Heart left ventricle (tissue), 16 donors: ENCODE measurements at regions of chr5 and their contacts with region 1.

Region 1: DNA sequence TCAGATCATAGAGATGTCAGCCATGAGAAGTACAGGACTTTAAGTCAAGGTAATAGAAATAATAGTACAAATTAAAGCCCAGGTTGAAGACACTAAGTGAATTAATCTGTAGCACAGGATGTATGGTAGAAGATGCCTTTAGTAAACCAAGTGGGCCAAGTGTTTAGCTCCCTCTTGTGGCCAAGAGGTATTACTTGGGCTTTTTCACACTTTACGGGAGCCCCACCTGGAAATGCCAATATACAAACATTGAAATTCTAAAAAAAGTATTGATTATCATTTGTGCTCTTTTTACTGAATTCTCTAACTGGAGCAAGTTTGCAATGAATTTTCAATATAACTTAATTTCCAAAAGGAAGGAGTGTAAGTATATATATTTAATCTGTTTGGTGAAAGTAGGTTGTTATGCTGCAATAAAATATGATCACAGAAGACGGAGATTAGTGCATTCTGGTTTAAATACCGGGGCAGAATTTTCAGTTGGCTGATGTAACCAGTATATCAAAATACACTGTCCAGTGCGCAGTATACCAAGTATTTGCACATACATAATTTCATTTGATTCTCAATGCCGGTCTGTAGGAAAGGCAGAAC is 84.7 kb downstream of the PARP8 start:
- DNase-seq: peak in 2 of 5 donors; percentile 18 to 22
- ATAC-seq: peak in 3 of 4 donors; percentile 65 to 75 (median 68)
- H3K4me3 ChIP-seq: no peak overlapping the region
- H3K27ac ChIP-seq: no peak overlapping the region
- H3K4me1 ChIP-seq: peaks cover 0 to 21% (median 0%) of the 10 kb centered on the region in 12 donors
- H3K27me3 ChIP-seq: no peaks in the 10 kb centered on the region
- CTCF ChIP-seq: peak; percentile 67 to 87 (median 80)
- POLR2A ChIP-seq: no peak

Region 2: DNA sequence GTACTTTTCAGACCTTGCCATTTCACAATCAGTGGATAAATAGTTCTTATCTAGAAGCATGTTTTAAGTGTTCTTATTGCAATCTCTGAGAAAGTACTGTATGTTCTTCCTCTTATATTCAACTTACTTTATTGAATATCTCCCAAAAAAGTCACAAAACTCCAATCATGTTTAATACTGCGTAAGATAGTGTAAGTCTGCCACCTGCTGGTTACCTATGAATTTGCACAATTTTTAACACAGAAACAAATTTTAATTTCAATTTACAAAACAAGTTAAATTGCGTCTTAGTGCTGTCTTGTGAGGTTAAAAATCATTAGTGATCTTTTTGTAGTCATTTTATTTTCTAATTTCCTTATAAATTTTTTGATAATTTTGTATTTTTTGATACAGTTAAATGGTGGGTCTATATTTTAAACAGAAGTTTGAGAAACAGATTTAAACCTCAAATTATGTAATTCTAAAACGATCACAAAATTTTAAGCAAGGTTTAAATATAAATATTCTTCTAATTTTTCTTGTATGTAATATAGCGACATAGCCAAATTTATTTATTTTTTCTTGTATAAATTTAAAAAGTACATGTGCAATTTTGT is 425.8 kb before region 1 on chr5:
- intact Hi-C with region 1: no loop called
- DNase-seq: no peak
- ATAC-seq: no peak
- H3K4me3 ChIP-seq: no peak overlapping the region
- H3K27ac ChIP-seq: no peak overlapping the region
- H3K4me1 ChIP-seq: no peaks in the 10 kb centered on the region
- H3K27me3 ChIP-seq: peaks cover 0 to 3% (median 0%) of the 10 kb centered on the region in 9 donors
- CTCF ChIP-seq: peak; percentile 52 to 81 (median 67)
- POLR2A ChIP-seq: no peak

Region 3: DNA sequence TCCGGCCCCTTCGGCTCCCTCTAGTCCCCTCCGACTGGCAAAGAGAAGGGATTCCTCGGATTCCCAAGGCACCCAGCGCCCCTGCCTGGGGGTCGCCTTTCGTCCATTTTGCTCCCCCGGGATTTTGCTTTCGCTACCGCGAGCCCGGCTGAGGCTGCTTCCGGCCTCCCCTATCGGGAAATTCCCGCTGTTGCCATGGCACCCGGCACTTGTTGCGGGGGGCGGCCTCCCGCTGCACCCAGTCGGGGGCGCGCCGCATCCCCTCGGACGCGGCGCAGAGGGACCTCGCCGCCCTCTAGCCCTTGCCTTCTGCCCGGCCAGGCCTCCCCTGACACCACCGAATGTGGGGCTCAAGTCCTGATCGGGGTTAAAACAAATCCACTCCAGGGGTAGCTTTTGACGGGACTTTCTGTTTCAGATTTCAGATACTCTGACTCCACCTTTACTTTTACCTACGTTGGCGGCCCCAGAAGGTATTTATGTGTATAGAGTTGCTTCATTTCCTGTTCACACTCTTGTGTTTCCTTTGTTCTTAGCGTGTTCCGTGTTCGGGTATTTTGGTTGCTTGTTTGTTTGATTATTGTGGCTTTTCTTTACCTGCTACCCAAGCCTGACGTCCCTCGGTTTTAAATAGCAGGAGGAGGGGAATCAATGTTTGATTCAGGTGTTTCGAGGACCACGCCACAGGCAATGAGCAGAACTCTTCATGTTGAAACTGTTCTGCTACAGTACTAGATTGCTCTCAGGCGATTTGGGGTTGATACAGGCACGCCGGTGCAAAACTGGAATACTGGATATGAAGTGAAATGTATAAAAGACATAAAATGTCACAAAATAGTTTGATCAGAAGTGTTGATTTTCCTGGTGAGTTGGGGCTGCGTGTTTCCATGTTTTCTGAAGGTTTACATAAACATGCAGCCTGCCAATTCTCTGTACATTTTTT is 83.2 kb before region 1 on chr5:
- intact Hi-C with region 1: loop called in 7 of 10 experiments (anchors 5 to 10 kb)
- DNase-seq: peak; percentile 74 to 86 (median 75)
- ATAC-seq: peak in 3 of 4 donors; percentile 34 to 59 (median 55)
- H3K4me3 ChIP-seq: peak overlapping the region; percentile 47 to 98 (median 92)
- H3K27ac ChIP-seq: peak overlapping the region; percentile 55 to 98 (median 80)
- H3K4me1 ChIP-seq: peaks cover 0 to 73% (median 5%) of the 10 kb centered on the region in 12 donors
- H3K27me3 ChIP-seq: no peaks in the 10 kb centered on the region
- CTCF ChIP-seq: no peak
- POLR2A ChIP-seq: no peak